ENCODE measurements at regions of chr5 and their contacts with region 1.

Region 1: DNA sequence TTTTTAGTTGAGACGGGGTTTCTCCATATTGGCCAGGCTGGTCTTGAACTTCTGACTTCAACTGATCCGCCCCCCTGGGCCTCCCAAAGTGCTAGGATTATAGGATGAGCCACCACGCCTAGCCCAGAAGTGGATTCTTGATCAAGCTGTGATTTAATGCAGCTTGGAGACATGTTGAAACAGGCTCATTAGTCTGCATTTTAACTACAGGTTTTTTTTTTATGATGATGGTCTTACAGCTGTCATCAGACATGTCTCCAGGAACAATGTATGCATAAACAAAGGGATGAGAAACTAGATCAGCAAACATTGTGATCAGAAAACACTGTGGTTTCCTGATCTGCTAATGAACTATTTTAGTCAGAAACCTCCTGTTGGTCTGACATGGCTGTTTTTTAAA is 30.0 kb upstream of the PLPP1 start:
- DNase-seq: peak; percentile 71
- H3K4me3 ChIP-seq: no peak overlapping the region
- H3K27ac ChIP-seq: no peak overlapping the region
- H3K4me1 ChIP-seq: peaks cover 6% of the 10 kb centered on the region
- H3K27me3 ChIP-seq: no peaks in the 10 kb centered on the region
- CTCF ChIP-seq: no peak

Region 2: GRCh38 chr5:55613112-55613868 is 48.6 kb after region 1 on chr5:
- CTCF ChIA-PET with region 1: no interaction called
- dilution Hi-C with region 1: loop called (anchors 5 kb)
- in situ Hi-C with region 1: no loop called
- intact Hi-C with region 1: no loop called
- DNase-seq: no peak
- H3K4me3 ChIP-seq: no peak overlapping the region
- H3K27ac ChIP-seq: no peak overlapping the region
- H3K4me1 ChIP-seq: no peaks in the 10 kb centered on the region
- H3K27me3 ChIP-seq: no peaks in the 10 kb centered on the region
- CTCF ChIP-seq: no peak